CD8-positive, alpha-beta memory T cell (primary cell): ENCODE measurements at regions of chr10 and their contacts with region 1.

Region 1: GRCh38 chr10:114103284-114103683 is 59.6 kb downstream of the ADRB1 start:
- DNase-seq: peak in 2 of 5 donors; percentile 20 to 27
- H3K4me3 ChIP-seq: no peak overlapping the region
- H3K4me3 Mint-ChIP-seq: peak overlapping the region in 1 of 7 donors; percentile 3
- H3K27ac ChIP-seq: no peak overlapping the region
- H3K27ac Mint-ChIP-seq: no peak overlapping the region
- H3K4me1 ChIP-seq: peaks cover 9% of the 10 kb centered on the region
- H3K4me1 Mint-ChIP-seq: peaks cover 28 to 38% (median 32%) of the 10 kb centered on the region in 3 donors
- H3K27me3 ChIP-seq: peaks cover 13% of the 10 kb centered on the region
- H3K27me3 Mint-ChIP-seq: peaks cover 20 to 28% of the 10 kb centered on the region in 2 donors

Region 2: DNA sequence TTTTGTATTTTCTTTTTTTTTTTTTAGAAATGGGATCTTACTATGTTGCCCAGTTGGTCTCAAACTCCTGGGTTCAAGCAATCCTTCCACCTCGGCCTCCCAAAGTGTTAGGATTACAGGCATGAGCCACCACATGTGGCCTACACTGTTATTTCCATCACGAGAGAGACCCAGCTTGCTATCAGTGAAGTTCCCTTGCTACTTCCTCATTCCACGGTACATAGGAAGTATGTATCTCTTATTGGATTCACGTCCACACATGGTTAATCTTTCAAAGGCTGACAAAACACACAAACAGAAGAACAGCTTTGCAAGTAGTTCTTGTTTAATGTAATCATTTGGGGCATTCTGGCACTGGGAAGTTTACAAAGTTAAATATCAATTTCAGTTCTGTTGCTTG is 300.3 kb before region 1 on chr10:
- CTCF ChIA-PET with region 1: interaction called, 50 read pairs
- POLR2A ChIA-PET with region 1: interaction called, 3 read pairs
- DNase-seq: no peak
- H3K4me3 ChIP-seq: no peak overlapping the region
- H3K4me3 Mint-ChIP-seq: no peak overlapping the region
- H3K27ac ChIP-seq: no peak overlapping the region
- H3K27ac Mint-ChIP-seq: no peak overlapping the region
- H3K4me1 ChIP-seq: no peaks in the 10 kb centered on the region
- H3K4me1 Mint-ChIP-seq: no peaks in the 10 kb centered on the region
- H3K27me3 ChIP-seq: peaks cover 4% of the 10 kb centered on the region
- H3K27me3 Mint-ChIP-seq: peaks cover 9 to 25% of the 10 kb centered on the region in 2 donors

Region 3: DNA sequence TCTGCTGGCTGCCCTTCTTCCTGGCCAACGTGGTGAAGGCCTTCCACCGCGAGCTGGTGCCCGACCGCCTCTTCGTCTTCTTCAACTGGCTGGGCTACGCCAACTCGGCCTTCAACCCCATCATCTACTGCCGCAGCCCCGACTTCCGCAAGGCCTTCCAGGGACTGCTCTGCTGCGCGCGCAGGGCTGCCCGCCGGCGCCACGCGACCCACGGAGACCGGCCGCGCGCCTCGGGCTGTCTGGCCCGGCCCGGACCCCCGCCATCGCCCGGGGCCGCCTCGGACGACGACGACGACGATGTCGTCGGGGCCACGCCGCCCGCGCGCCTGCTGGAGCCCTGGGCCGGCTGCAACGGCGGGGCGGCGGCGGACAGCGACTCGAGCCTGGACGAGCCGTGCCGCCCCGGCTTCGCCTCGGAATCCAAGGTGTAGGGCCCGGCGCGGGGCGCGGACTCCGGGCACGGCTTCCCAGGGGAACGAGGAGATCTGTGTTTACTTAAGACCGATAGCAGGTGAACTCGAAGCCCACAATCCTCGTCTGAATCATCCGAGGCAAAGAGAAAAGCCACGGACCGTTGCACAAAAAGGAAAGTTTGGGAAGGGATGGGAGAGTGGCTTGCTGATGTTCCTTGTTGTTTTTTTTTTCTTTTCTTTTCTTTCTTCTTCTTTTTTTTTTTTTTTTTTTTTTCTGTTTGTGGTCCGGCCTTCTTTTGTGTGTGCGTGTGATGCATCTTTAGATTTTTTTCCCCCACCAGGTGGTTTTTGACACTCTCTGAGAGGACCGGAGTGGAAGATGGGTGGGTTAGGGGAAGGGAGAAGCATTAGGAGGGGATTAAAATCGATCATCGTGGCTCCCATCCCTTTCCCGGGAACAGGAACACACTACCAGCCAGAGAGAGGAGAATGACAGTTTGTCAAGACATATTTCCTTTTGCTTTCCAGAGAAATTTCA is 57.9 kb before region 1 on chr10:
- CTCF ChIA-PET with region 1: no interaction called
- POLR2A ChIA-PET with region 1: no interaction called
- DNase-seq: peak in 2 of 5 donors; percentile 4 to 6
- H3K4me3 ChIP-seq: no peak overlapping the region
- H3K4me3 Mint-ChIP-seq: peak overlapping the region; percentile 66 to 91 (median 79)
- H3K27ac ChIP-seq: no peak overlapping the region
- H3K27ac Mint-ChIP-seq: peak overlapping the region in 3 of 8 donors; percentile 25 to 68 (median 39)
- H3K4me1 ChIP-seq: peaks cover 6% of the 10 kb centered on the region
- H3K4me1 Mint-ChIP-seq: peaks cover 16 to 38% (median 28%) of the 10 kb centered on the region in 3 donors
- H3K27me3 ChIP-seq: peaks cover 22% of the 10 kb centered on the region
- H3K27me3 Mint-ChIP-seq: peaks cover 35 to 62% of the 10 kb centered on the region in 2 donors

Region 4: GRCh38 chr10:114083040-114083439 is 20.2 kb before region 1 on chr10:
- CTCF ChIA-PET with region 1: no interaction called
- POLR2A ChIA-PET with region 1: no interaction called
- DNase-seq: peak in 1 of 5 donors; percentile 13
- H3K4me3 ChIP-seq: no peak overlapping the region
- H3K4me3 Mint-ChIP-seq: no peak overlapping the region
- H3K27ac ChIP-seq: no peak overlapping the region
- H3K27ac Mint-ChIP-seq: no peak overlapping the region
- H3K4me1 ChIP-seq: no peaks in the 10 kb centered on the region
- H3K4me1 Mint-ChIP-seq: no peaks in the 10 kb centered on the region
- H3K27me3 ChIP-seq: no peaks in the 10 kb centered on the region
- H3K27me3 Mint-ChIP-seq: peaks cover 0 to 2% of the 10 kb centered on the region in 2 donors